Left colon (tissue), 2 donors: ENCODE measurements at regions of chr5 and their contacts with region 1.

Region 1: DNA sequence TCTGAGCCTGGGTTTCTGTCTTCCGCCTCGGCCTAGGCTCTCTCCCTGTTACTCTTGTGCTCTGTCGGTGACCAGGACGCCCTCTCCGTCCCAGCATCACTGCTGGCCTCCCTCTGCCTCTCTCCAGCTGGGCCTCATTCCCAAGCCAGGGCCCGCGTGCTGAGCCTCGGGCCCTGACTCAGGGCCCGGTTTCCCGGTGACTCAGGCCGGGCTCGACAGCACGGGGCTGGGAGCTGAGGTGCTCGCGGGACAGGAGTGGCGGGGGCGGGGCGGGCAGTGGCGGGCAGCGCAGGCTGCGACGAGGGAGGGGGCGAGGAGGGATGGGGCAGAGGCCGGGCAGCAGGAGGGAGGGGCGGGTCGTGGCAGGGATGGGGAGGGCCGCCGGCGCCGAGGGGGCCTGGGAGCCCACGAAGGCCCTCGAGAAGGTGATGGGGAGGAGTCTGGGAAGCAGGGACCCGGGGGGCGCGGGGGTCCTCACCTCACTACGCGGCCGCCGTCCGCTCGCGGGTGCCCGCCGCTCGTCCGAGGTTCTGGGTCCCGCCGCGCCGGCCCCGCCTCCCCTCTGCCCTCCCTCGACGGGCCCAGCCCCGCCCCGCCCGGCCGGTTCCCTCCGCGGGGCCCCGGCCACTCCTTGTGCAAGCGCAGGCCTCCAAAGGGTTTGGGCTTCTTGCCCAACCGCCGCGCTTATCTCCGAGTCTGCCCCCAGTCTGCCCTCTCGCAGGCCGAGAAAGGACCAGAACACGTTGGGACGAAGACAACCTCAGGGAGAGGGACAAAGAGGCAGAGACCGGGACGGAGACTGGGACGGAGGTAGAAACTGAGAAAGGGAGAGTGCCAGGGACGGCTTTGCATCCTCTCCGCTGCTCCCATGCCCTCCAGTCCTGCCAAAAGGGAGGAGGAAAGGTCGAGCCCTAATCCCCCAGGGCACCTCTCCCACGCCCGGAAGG is at the start of gene ARAP3:
- DNase-seq: peak; percentile 82 to 85
- ATAC-seq: peak; percentile 94
- total RNA-seq, gene ARAP3: 5.3 to 7.1 TPM

Region 2: DNA sequence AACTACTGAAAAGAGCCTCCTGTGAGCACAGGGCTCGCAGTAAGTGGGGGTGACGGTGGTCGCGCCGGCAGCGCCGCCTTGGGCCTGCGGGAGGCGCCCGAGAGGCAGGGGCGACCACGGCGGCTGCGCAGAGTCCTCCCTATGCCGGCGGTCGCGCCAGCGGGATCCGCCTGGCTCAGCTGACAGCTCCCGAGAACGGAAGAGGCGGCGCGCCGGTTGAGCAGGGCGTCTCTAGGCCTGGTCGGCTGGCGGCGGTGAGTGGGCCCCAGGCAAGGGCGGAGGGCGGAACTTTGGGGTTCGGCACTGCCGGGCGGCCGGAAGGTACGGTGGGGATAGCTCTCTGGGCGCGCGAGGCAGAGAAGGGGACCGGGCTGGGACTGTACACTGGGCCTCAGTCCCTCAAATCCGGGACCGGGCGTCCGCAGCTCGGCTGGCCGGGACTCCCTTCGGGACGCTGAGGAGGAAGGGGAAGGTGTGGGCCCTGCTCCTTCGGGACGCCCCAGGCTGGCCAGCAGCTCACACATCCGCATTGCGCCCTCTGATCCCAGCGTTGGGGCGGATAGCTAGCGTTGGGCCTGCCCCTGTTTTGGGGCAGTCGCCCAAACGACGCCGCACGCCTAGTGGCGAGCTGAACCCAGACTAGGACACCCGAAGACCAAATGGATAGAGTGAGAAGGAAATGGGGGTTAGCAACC is 287.1 kb after region 1 on chr5 and contains the start of gene RNF14:
- intact Hi-C with region 1: loop called in 1 of 2 experiments (anchors 10 kb)
- DNase-seq: peak; percentile 95 to 96
- ATAC-seq: peak; percentile 94
- total RNA-seq, gene RNF14: 69.3 to 72.0 TPM

Region 3: GRCh38 chr5:142128675-142129208 is 446.8 kb after region 1 on chr5:
- intact Hi-C with region 1: no loop called
- DNase-seq: no peak
- ATAC-seq: no peak